HEK293T (cell line): ENCODE measurements at regions of chr16 and their contacts with region 1.

Region 1: DNA sequence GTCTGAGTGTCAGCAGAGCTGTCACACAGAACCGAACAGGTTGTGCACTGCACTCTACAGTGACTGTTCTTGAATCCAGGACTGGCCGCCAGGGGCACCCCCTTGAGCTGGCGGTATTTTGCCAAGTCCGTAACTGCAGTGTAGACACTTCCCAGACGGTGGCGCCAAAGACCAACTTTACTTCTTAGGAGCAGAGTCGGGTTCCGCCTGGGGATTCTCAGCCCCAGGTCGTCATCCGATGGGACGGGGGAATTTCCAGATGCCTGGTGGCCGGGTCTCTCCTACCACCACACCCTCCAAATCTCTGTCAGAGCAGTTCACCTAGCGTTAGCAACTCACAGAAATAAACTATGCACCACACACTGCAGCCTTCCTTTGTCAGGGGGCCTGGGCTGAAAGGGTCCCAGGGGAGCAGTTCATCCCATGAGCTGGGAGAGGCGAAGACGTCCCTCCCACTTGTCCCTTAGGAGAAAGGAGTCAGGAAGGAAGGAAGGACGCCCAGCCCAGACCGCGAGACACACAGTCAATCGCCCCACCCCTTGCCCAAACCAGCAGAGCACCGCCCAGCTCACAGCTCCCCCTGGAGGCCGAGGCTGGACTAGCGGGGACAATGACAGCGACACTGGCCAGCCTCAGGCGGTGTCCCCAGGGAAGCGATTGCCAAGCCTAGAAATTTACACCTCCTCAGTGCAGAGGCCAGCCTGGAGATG is 7.4 kb upstream of the RIPOR1 start:
- DNase-seq: peak; percentile 92

Region 2: DNA sequence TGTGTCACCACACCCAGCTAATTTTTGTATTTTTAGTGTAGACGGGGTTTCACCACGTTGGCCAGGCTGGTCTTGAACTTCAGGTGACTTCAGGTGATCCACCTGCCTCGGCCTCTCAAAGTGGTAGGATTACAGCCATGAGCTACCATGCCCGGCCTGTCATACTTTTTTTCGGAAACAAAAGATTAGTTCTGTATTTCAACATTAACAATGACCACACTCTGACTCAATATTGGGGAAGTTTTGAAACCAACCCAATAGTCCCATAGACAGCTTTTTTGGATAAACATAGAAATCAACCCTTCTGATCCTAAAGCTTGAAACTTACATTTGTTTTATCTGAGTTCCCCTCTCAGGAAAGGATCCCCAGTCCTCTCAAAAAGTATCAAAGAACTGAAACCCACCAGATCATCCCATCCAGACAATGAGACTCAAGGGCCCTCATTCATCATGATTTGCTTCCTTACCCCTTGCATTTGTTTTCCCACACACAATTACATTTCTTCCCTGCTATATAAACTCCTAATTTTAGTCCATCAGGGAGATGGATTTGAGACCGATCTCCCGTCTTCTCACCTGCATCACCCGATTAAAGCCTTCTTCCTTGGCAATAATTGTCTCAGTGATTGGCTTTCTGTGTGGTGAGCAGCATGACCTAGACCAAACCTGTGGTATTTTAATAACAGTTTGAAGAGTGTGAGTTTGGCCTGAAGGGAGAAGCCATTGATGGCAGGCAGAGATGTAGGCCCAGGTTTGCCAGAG is 30.7 kb before region 1 on chr16:
- CTCF ChIA-PET with region 1: interaction called, 12 read pairs
- POLR2A ChIA-PET with region 1: no interaction called
- DNase-seq: no peak

Region 3: DNA sequence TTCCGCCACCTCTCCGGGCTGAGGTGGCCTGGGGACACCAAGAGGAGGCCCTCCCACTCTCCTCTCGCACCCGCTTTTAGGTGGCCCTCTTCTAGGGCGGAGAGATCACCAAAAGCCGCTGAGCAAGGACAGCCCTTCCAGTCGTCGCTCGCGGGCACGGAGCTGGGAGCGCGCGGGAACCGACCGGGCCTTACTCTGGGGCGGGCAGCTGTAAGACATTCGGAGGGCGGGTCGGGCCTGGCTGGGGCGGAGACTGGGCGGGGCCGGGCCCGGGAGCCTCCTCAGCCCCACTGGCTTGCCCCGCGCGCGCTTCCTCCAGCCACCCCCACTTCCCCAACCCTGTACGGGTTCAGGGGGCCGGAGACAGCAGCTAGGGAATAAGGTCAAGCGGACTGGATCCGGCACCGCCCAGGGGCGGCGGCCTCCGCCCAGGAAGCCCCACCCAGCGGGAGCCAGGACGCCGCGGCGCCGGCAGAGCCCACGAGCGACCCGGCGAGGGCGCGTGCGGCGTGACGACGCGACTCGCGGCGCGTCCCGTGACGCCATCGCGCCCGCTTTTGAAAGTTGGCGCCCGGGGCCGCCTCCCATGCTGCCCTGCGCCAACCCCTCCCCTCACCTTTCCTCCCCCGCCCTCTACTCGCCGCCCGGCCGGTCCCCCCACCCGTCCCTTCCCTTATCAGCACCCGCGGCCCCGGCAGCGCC is 40.7 kb after region 1 on chr16:
- CTCF ChIA-PET with region 1: interaction called, 3 read pairs
- POLR2A ChIA-PET with region 1: interaction called, 19 read pairs
- DNase-seq: peak; percentile 97

Region 4: GRCh38 chr16:67660564-67661028 is 139.3 kb after region 1 on chr16 and contains the start of gene PARD6A:
- CTCF ChIA-PET with region 1: interaction called, 31 read pairs
- POLR2A ChIA-PET with region 1: interaction called, 8 read pairs
- DNase-seq: peak; percentile 94

Region 5: DNA sequence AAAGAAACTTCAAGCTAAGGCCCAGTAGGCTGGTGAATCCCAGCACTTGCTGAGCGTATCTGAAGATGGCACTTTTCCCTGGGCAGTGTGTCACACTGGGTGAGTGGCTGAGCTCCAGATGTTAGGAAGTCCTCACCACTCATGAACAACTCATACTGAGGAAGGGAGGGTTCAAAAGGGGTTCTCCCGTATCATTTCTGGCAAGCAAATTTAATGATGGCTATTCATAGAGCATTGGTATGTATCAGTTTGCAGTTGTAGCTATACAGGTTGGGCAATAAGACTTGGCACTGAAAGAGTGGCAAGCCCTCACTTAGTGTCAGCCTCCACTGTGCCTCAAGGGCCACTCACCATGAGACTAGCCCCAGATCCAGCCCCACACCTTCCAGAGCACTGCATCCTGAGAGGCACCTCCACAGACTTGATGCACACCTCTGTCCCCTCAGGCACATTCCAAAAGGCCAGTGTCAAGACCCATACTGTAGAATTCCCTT is 187.2 kb after region 1 on chr16:
- CTCF ChIA-PET with region 1: no interaction called
- POLR2A ChIA-PET with region 1: no interaction called
- DNase-seq: no peak